Activated CD4-positive, alpha-beta memory T cell treated with anti-CD3 and anti-CD28 coated beads for 36 hours (primary cell): ENCODE measurements at regions of chr5 and their contacts with region 1.

Region 1: DNA sequence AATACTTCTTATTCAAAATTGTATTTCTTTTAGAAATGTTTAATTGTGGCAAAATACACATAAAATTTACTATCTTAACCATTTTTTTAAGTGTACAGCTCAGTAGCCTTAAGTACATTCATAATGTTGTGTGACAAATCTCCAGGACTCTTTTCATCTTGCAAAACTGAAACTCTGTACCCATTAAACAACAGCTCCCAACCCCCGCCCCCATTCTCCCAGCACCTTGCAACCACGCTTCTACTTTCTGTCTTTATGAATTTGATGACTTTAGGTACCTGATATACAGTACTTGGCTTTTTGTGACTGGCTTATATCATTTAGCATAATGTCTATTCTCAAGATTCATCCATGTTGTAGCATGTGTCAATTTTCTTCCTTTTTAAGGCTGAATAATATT is 2.8 kb upstream of the IL5 start:
- DNase-seq: peak; percentile 85
- H3K4me3 Mint-ChIP-seq: no peak overlapping the region
- H3K27ac Mint-ChIP-seq: no peak overlapping the region
- H3K4me1 Mint-ChIP-seq: peaks cover 25% of the 10 kb centered on the region
- H3K27me3 Mint-ChIP-seq: peaks cover 7% of the 10 kb centered on the region

Region 2: DNA sequence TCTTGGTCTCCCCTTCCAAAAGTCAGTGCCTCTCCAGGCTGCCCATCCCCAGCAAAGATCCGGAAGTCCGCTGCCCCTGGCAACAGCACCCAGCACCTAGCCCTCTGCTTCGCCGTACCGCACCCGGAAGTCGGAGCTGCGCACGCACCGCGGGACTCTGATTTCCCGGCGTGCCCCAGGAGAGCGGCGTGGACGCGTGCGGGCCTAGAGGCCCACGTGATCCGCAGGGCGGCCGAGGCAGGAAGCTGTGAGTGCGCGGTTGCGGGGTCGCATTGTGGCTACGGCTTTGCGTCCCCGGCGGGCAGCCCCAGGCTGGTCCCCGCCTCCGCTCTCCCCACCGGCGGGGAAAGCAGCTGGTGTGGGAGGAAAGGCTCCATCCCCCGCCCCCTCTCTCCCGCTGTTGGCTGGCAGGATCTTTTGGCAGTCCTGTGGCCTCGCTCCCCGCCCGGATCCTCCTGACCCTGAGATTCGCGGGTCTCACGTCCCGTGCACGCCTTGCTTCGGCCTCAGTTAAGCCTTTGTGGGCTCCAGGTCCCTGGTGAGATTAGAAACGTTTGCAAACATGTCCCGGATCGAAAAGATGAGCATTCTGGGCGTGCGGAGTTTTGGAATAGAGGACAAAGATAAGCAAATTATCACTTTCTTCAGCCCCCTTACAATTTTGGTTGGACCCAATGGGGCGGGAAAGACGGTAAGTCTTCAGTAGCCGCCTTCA is 10.8 kb after region 1 on chr5 and contains the start of gene RAD50:
- CTCF ChIA-PET with region 1: interaction called, 4 read pairs
- POLR2A ChIA-PET with region 1: interaction called, 3 read pairs
- intact Hi-C with region 1: loop called (anchors 1 kb)
- DNase-seq: peak; percentile 96
- H3K4me3 Mint-ChIP-seq: peak within 1 kb of the TSS; percentile 99
- H3K27ac Mint-ChIP-seq: peak within 1 kb of the TSS; percentile 94
- H3K4me1 Mint-ChIP-seq: peaks cover 19% of the 10 kb centered on the region
- H3K27me3 Mint-ChIP-seq: no peaks in the 10 kb centered on the region
- total RNA-seq, gene RAD50: 44.6 to 47.6 TPM

Region 3: DNA sequence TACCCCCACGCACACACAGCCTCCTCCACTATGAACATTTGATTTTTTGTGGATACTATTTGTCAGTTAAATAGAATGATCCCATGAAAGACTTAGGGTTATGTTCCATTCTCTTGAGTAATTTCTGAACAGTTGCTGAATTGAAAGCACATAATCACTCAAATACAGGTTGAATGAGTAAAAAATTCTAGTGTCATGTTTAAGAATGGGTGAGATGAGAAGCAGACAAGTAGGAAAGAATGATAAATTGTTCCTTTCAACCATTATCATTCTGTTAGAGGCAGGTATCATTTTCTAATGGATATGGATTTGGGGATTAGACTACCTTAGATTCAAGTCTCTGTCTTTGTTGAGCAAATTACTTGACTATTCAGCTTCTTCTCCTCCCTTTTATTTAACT is 30.0 kb after region 1 on chr5:
- CTCF ChIA-PET with region 1: no interaction called
- POLR2A ChIA-PET with region 1: no interaction called
- intact Hi-C with region 1: no loop called
- DNase-seq: no peak
- H3K4me3 Mint-ChIP-seq: no peak overlapping the region
- H3K27ac Mint-ChIP-seq: peak overlapping the region; percentile 9
- H3K4me1 Mint-ChIP-seq: peaks cover 34% of the 10 kb centered on the region
- H3K27me3 Mint-ChIP-seq: no peaks in the 10 kb centered on the region